Activated naive CD4-positive, alpha-beta T cell treated with anti-CD3 and anti-CD28 coated beads for 36 hours (primary cell): ENCODE measurements at regions of chr7 and their contacts with region 1.

Region 1: GRCh38 chr7:151519765-151520418 is at the start of gene RHEB:
- DNase-seq: peak; percentile 99
- H3K4me3 Mint-ChIP-seq: peak within 1 kb of the TSS; percentile 98
- H3K27ac Mint-ChIP-seq: peak within 1 kb of the TSS; percentile 98
- H3K4me1 Mint-ChIP-seq: peaks cover 38% of the 10 kb centered on the region
- H3K27me3 Mint-ChIP-seq: no peaks in the 10 kb centered on the region
- total RNA-seq, gene RHEB: 58.7 to 62.7 TPM

Region 2: DNA sequence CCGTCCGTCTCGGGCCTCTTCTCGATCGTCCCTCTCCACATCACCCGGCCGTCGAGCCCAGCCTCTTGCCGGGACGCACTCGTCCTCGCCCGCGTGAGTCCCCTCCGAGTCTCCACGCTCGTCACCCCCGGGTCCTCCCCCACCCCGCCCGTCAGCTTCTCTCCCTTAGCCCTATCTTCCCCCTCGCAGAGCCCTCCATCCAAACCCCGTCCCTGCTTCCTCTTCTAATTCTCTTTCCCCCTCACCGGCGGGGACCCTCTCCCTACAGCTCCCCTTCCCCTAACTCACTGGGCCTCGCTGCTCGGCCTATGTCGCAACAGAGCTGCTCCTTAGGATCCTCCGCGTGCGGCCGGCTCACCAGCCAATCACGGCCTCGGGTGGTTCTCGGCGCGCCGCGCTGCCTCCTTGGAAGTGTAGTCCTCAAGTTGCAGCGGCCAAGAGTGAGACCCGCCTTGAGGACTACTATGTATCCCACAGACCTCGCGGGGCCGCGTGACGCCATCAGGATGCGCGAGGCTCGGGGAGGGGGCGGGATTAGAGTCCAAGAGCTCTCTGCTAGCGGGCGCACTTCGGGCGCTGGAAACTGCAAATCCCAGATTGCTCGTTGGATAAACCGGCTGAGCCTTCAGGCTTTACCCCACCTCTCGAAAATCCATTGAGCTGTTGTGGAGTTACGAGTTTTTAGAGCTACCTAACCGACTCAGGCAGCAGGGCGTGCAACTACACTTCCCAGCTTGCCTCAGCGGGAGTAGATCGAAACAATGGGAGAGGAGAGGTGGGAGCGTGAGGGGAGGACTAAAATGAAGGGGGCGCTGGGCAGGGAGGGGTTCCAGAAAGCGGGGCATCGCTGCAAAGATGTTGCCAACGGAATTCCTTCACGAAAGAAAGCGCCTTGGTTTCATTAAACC is 292.8 kb before region 1 on chr7 and contains the start of gene ABCF2:
- CTCF ChIA-PET with region 1: no interaction called
- intact Hi-C with region 1: loop called (anchors 1 kb)
- DNase-seq: peak; percentile 100
- H3K4me3 Mint-ChIP-seq: peak within 1 kb of the TSS; percentile 99
- H3K27ac Mint-ChIP-seq: peak within 1 kb of the TSS; percentile 81
- H3K4me1 Mint-ChIP-seq: peaks cover 43% of the 10 kb centered on the region
- H3K27me3 Mint-ChIP-seq: no peaks in the 10 kb centered on the region
- total RNA-seq, gene ABCF2: 33.9 to 35.5 TPM

Region 3: DNA sequence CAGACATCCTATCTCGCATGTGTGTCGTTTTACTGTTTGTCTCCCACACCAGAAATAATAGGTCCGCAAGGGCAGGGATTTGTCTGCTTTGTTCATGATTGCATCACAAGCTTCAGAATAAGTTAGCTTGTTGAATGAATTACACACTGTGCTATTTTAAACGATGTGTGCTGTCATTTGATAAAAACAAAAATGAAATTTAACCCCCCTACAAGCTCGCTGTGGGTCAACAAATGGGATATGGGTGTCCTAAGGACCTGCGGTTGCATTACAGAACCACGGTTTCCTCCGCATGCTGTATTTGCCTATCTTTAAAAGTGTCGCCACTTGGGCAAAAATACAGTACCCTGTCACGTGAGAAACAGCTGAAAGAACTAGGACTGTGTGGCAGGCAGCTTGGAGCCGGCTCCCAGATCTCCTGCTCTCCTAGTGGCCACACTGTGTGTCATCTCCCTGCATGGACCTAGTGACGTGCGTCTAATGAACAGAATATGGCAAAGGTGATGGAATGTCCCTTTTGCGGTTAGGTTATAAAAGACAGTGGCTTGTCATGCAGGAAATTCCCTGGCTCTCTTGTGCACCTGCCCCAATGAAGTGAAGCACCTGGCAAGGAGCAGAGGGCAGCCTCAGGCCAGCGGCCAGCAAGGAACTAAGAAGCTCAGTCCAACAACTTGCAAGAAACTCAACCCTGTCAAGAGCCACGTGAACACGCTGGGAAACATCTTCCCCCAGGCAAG is 47.1 kb before region 1 on chr7:
- CTCF ChIA-PET with region 1: no interaction called
- intact Hi-C with region 1: loop called (anchors 2 kb)
- DNase-seq: no peak
- H3K4me3 Mint-ChIP-seq: no peak overlapping the region
- H3K27ac Mint-ChIP-seq: no peak overlapping the region
- H3K4me1 Mint-ChIP-seq: peaks cover 31% of the 10 kb centered on the region
- H3K27me3 Mint-ChIP-seq: no peaks in the 10 kb centered on the region

Region 4: DNA sequence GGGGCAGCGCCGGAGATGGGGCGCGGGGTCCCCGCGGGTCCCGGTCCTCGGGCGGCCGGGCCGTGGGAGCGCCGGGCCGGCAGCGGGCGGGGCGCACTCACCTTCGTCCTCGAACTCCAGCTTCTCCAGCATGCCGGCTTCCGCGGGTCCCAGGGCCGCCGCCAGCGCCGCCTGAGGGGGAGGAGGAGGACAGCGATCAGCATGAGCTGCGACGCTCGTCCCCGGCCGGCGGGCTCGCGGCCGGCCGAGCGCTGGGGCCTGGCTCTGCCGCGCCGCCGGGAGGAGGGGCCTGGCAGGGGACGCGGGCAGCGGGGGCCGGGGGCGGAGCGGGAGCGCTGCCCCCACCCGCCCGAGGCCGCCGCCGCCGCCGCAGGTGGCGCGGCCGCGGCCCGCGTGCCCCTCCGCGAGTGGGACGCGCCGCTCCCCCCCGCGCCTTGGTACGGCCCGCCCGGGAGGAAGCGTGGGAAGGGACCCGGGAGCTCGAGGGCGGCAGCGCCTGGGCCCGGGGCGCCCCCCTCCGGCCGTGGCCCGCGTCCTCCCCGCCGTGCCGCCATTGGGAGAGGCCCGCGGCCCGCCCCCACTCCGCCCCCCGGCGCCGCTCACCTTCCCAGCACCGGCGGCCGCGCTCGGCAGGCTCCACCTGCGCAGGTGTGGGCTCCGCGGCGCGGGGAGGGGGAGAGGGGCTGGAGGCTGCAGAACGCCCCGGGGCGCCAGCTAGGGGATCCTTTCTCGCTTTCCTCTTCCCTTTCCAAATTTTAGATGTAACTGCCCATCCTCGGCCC is 112.3 kb after region 1 on chr7:
- CTCF ChIA-PET with region 1: interaction called, 5 read pairs
- intact Hi-C with region 1: loop called (anchors 1 kb)
- DNase-seq: peak; percentile 87
- H3K4me3 Mint-ChIP-seq: peak overlapping the region; percentile 95
- H3K27ac Mint-ChIP-seq: peak overlapping the region; percentile 99
- H3K4me1 Mint-ChIP-seq: peaks cover 23% of the 10 kb centered on the region
- H3K27me3 Mint-ChIP-seq: no peaks in the 10 kb centered on the region

Region 5: GRCh38 chr7:151769188-151769841 is 249.4 kb after region 1 on chr7:
- CTCF ChIA-PET with region 1: no interaction called
- intact Hi-C with region 1: loop called (anchors 1 kb)
- DNase-seq: peak; percentile 62
- H3K4me3 Mint-ChIP-seq: peak overlapping the region; percentile 10
- H3K27ac Mint-ChIP-seq: peak overlapping the region; percentile 86
- H3K4me1 Mint-ChIP-seq: peaks cover 51% of the 10 kb centered on the region
- H3K27me3 Mint-ChIP-seq: no peaks in the 10 kb centered on the region

Region 6: GRCh38 chr7:151936207-151936606 is 416.3 kb after region 1 on chr7:
- CTCF ChIA-PET with region 1: no interaction called
- intact Hi-C with region 1: loop called (anchors 10 kb)
- DNase-seq: no peak
- H3K4me3 Mint-ChIP-seq: peak overlapping the region; percentile 45
- H3K27ac Mint-ChIP-seq: peak overlapping the region; percentile 73
- H3K4me1 Mint-ChIP-seq: peaks cover 30% of the 10 kb centered on the region
- H3K27me3 Mint-ChIP-seq: no peaks in the 10 kb centered on the region

Region 7: GRCh38 chr7:152463709-152464311 is 943.9 kb after region 1 on chr7:
- CTCF ChIA-PET with region 1: no interaction called
- intact Hi-C with region 1: loop called (anchors 1 kb)
- DNase-seq: peak; percentile 100
- H3K4me3 Mint-ChIP-seq: peak overlapping the region; percentile 89
- H3K27ac Mint-ChIP-seq: no peak overlapping the region
- H3K4me1 Mint-ChIP-seq: peaks cover 8% of the 10 kb centered on the region
- H3K27me3 Mint-ChIP-seq: no peaks in the 10 kb centered on the region